ENCODE measurements at regions of chr10 and their contacts with region 1.

Region 1: DNA sequence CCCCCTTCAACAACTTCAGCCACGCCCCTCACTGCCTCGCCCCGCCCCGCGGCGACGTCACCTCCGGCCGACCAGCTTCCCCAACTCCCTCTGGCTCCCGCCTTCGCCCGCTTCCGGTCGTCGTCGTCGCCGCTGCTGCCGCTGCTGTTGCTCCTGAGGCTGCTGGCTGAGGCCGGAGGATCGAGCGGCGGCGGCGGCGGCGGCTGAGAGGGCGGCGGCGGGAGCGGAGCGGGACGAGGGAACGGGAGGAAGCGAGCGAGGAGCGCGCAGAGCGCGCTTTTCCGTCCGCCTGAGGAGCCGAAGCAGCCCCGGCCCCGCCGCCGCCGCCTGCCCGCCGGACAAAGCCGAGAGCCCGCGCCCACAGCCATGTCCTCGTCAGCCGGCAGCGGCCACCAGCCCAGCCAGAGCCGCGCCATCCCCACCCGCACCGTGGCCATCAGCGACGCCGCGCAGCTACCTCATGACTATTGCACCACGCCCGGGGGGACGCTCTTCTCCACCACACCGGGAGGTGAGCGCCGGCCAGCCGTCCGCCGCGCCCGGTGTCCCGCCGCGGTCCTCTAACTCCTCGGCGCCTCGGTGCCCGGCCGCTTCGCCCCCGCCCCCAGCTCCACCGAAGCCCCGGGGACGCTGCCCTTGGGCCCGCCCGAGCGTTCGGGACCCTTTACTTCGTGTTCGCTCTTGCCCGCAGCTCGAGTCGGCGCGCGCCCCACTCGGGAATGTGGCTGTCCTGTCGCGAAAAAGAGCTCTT is at the start of gene EIF4EBP2:
- DNase-seq: peak; percentile 84
- ATAC-seq: peak; percentile 80
- H3K4me3 ChIP-seq: peak within 1 kb of the TSS; percentile 90 to 94 (median 92)
- H3K27ac ChIP-seq: peak within 1 kb of the TSS; percentile 82
- H3K4me1 ChIP-seq: peaks cover 49% of the 10 kb centered on the region
- H3K27me3 ChIP-seq: no peaks in the 10 kb centered on the region; a peak in 1 of 5 replicates
- CTCF ChIP-seq: peak; percentile 31; the same call in 1 of the 2 replicates
- EP300 ChIP-seq: no peak
- POLR2A ChIP-seq: peak; percentile 63 to 90
- RAD21 ChIP-seq: peak; percentile 50
- total RNA-seq, gene EIF4EBP2: 22.0 and 38.0 TPM in 2 replicates

Region 2: GRCh38 chr10:70169649-70170364 is 234.4 kb before region 1 on chr10:
- CTCF ChIA-PET with region 1: no interaction called
- POLR2A ChIA-PET with region 1: interaction called, 14 read pairs
- in situ Hi-C with region 1: no loop called
- intact Hi-C with region 1: no loop called
- DNase-seq: no peak
- ATAC-seq: peak; percentile 5
- H3K4me3 ChIP-seq: peak overlapping the region; percentile 82 to 90 (median 90)
- H3K27ac ChIP-seq: peak overlapping the region; percentile 80
- H3K4me1 ChIP-seq: peaks cover 69% of the 10 kb centered on the region
- H3K27me3 ChIP-seq: no peaks in the 10 kb centered on the region; a peak in 1 of 5 replicates
- CTCF ChIP-seq: no peak
- EP300 ChIP-seq: no peak
- POLR2A ChIP-seq: no peak; a peak in 1 of 4 replicates
- RAD21 ChIP-seq: no peak

Region 3: DNA sequence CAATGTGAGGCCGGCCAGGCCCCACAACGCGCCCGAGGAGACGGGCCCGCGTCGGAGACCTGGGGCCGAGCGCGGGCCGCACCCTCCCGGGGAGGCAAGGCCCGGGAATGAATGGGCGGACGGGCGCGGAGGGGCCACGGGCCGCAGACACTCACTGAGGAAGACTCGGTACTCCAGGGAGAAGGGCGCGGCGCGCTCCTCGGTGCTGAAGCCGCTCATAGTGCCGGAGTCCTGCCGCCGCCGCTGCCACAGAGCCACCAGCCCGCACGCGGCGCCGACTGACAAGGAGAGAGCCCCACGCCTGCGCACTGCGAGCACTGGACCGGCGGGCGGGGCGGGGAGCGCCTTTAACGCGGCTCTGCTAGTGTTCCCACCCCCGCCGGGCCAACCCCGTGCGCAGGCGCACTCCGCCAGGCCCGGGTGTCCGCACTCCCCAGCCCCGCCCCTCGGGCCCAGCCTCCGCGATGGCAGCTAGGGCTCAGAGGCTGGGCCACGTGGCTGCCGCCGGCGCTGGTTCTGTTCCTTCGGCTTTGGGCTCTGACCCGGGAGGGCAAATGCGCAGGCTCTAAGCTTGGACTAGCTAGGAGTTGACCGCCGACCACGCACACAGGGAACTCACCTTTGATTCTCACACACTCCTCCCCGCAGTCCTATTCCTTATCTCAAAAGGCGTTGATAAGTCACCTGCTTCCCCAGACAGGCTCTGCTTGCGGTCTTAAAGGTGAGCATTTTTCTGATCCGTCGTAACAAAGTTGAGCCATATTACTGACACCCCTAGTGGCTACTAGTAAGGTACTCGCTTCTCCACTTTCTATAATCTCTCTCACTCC is 170.9 kb before region 1 on chr10 and contains the start of gene PPA1:
- CTCF ChIA-PET with region 1: no interaction called
- POLR2A ChIA-PET with region 1: interaction called, 12 read pairs
- in situ Hi-C with region 1: no loop called
- intact Hi-C with region 1: no loop called
- DNase-seq: peak; percentile 92
- ATAC-seq: peak; percentile 89
- H3K4me3 ChIP-seq: peak within 1 kb of the TSS; percentile 82 to 93 (median 86)
- H3K27ac ChIP-seq: peak within 1 kb of the TSS; percentile 92
- H3K4me1 ChIP-seq: peaks cover 68% of the 10 kb centered on the region
- H3K27me3 ChIP-seq: no peaks in the 10 kb centered on the region; a peak in 1 of 5 replicates
- CTCF ChIP-seq: peak; percentile 38; the same call in 1 of the 2 replicates
- EP300 ChIP-seq: peak in 1 of 2 experiments; percentile 42; a peak in 1 of 4 replicates
- POLR2A ChIP-seq: peak; percentile 89 to 97
- RAD21 ChIP-seq: peak; percentile 40; the same call in 1 of the 2 replicates
- total RNA-seq, gene PPA1: 250 and 371 TPM in 2 replicates

Region 4: DNA sequence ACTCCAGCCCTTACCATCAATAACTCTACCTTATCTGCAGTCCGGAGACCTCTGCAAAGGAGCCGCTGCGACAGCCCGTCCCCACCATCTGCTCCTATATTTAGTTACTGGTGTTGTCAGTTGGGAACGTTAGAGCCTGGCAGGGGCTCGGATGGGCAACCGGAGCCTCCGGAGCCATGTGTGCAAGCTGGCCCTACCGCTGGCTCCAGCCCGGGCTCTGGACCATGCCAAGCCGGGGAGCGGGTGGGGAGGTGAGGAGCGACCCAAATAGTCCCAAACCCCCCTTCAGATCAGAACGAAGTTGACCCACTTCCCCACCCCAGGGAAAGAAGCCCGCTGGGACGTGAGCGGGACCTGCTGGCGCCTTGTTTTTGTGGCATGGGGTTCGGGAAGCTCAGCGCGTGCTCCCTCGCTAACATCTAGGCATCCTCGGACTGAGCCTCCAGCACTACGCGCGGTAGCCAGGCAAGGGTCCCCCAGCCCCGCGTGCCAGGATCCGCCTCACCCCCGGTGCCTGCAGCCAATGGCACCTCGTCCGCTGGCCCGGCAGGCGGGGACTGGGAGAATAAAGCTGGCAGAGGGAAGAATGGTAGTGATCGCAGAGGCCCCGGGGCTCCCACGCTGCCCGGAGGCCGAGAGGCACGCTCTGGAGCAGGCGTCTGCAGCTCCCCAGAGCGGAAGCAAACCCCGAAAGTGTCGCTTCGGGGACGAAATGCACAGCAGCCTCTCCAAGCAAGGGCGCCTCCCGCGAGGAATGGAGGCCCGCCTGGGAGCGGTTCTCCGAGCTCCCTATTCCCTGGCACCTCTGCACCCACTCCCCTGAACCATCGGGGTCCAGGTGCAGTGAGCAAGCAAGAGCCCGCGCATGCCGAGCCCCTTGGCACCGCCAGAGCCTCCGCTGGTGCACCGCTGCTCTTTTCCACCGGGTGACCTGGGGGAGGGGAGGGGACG is 22.5 kb before region 1 on chr10:
- CTCF ChIA-PET with region 1: no interaction called
- POLR2A ChIA-PET with region 1: interaction called, 7 read pairs
- in situ Hi-C with region 1: no loop called
- intact Hi-C with region 1: loop called (anchors 2 kb)
- DNase-seq: no peak
- ATAC-seq: peak; percentile 49
- H3K4me3 ChIP-seq: peak overlapping the region; percentile 71 to 87 (median 75)
- H3K27ac ChIP-seq: no peak overlapping the region
- H3K4me1 ChIP-seq: peaks cover 41% of the 10 kb centered on the region
- H3K27me3 ChIP-seq: peaks cover 2 to 23% of the 10 kb centered on the region in 2 experiments; a peak in 3 of 5 replicates
- CTCF ChIP-seq: no peak; the same call in 1 of the 2 replicates
- EP300 ChIP-seq: no peak
- POLR2A ChIP-seq: no peak
- RAD21 ChIP-seq: no peak

Region 5: DNA sequence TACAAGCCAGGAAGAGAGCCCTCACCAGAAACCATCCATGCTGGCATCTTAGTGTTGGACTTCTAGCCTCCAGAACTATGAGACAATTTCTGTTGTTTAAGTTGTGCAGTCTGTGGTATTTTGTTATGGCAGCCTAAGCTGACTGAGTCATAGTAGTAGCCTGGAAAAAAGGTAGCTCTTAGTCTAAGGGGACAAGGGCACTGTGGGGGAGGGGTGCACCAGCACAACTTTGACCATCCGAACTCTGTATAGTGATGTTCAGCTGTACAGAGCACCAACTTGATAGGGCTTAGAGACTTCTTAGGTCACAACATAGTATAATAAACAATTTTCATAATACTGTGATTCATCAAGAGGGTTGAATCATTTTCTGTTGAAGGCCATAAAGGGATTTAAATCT is 14.0 kb after region 1 on chr10:
- CTCF ChIA-PET with region 1: no interaction called
- POLR2A ChIA-PET with region 1: interaction called, 15 read pairs
- in situ Hi-C with region 1: no loop called
- intact Hi-C with region 1: no loop called
- DNase-seq: no peak
- ATAC-seq: peak; percentile 54
- H3K4me3 ChIP-seq: no peak overlapping the region
- H3K27ac ChIP-seq: no peak overlapping the region
- H3K4me1 ChIP-seq: peaks cover 33% of the 10 kb centered on the region
- H3K27me3 ChIP-seq: no peaks in the 10 kb centered on the region
- CTCF ChIP-seq: no peak
- EP300 ChIP-seq: no peak
- POLR2A ChIP-seq: no peak
- RAD21 ChIP-seq: no peak

Region 6: DNA sequence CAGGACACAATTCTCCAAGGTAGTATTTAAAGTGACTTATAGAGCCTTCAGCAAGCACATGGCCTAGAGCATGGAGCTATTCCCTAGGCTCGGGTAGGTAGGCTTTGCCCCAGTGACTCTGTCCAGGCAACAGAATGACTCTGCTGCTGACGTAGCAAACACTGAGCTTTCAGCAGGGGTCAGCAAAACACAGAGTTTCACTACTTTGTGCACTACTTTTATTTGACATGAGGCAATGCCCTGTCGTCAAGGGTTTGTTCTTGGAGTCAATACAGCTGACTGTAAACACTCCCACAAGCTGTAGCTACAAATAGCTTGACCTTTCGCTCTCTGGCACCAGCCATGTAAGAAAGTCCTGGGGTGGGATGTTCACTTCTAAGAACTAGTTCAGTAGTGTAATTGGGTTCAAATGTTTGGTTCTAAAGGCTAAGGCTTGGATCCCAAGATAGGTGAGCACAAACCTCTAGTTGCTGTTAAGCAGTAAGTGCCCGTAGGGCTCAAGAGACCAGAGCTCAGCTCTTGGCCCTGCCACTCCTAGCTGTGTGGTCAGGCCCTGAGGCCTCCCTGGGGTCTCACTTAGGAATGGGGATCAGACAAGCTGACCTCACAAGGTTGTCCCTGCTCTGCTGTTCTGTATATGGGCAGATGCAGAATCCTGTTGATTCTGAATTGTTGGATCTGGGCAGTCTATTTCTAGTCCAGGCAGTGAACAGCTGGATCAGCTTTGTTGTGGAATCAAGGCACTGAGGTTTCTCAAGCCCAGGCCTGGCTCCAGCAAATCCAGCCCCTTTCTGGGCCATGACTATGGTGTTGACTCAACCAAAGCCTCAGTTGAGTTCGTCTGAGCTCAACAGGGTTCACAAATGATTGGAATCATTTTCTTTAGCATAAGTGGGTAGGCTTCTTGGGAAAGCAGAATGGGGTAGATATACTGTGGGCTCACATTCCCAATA is 26.6 kb after region 1 on chr10:
- CTCF ChIA-PET with region 1: no interaction called
- POLR2A ChIA-PET with region 1: interaction called, 32 read pairs
- in situ Hi-C with region 1: no loop called
- intact Hi-C with region 1: no loop called
- DNase-seq: peak; percentile 80
- ATAC-seq: peak; percentile 80
- H3K4me3 ChIP-seq: no peak overlapping the region
- H3K27ac ChIP-seq: no peak overlapping the region
- H3K4me1 ChIP-seq: peaks cover 29% of the 10 kb centered on the region
- H3K27me3 ChIP-seq: no peaks in the 10 kb centered on the region
- CTCF ChIP-seq: peak; percentile 80
- EP300 ChIP-seq: no peak
- POLR2A ChIP-seq: no peak
- RAD21 ChIP-seq: peak; percentile 46; the same call in 1 of the 2 replicates

Region 7: GRCh38 chr10:70445718-70446657 is 41.8 kb after region 1 on chr10:
- CTCF ChIA-PET with region 1: no interaction called
- POLR2A ChIA-PET with region 1: interaction called, 17 read pairs
- in situ Hi-C with region 1: no loop called
- intact Hi-C with region 1: no loop called
- DNase-seq: no peak
- ATAC-seq: no peak
- H3K4me3 ChIP-seq: no peak overlapping the region
- H3K27ac ChIP-seq: no peak overlapping the region
- H3K4me1 ChIP-seq: peaks cover 70% of the 10 kb centered on the region
- H3K27me3 ChIP-seq: no peaks in the 10 kb centered on the region; a peak in 2 of 5 replicates
- CTCF ChIP-seq: no peak
- EP300 ChIP-seq: peak in 1 of 2 experiments; percentile 16; a peak in 1 of 4 replicates
- POLR2A ChIP-seq: no peak
- RAD21 ChIP-seq: no peak

Region 8: GRCh38 chr10:70461215-70461986 is 57.2 kb after region 1 on chr10:
- CTCF ChIA-PET with region 1: no interaction called
- POLR2A ChIA-PET with region 1: no interaction called
- in situ Hi-C with region 1: no loop called
- intact Hi-C with region 1: no loop called
- DNase-seq: peak; percentile 37
- ATAC-seq: peak; percentile 85
- H3K4me3 ChIP-seq: no peak overlapping the region
- H3K27ac ChIP-seq: no peak overlapping the region
- H3K4me1 ChIP-seq: no peaks in the 10 kb centered on the region
- H3K27me3 ChIP-seq: peaks cover 2 to 18% of the 10 kb centered on the region in 2 experiments; a peak in 4 of 5 replicates
- CTCF ChIP-seq: peak; percentile 89
- EP300 ChIP-seq: no peak
- POLR2A ChIP-seq: no peak
- RAD21 ChIP-seq: peak; percentile 82

Region 9: DNA sequence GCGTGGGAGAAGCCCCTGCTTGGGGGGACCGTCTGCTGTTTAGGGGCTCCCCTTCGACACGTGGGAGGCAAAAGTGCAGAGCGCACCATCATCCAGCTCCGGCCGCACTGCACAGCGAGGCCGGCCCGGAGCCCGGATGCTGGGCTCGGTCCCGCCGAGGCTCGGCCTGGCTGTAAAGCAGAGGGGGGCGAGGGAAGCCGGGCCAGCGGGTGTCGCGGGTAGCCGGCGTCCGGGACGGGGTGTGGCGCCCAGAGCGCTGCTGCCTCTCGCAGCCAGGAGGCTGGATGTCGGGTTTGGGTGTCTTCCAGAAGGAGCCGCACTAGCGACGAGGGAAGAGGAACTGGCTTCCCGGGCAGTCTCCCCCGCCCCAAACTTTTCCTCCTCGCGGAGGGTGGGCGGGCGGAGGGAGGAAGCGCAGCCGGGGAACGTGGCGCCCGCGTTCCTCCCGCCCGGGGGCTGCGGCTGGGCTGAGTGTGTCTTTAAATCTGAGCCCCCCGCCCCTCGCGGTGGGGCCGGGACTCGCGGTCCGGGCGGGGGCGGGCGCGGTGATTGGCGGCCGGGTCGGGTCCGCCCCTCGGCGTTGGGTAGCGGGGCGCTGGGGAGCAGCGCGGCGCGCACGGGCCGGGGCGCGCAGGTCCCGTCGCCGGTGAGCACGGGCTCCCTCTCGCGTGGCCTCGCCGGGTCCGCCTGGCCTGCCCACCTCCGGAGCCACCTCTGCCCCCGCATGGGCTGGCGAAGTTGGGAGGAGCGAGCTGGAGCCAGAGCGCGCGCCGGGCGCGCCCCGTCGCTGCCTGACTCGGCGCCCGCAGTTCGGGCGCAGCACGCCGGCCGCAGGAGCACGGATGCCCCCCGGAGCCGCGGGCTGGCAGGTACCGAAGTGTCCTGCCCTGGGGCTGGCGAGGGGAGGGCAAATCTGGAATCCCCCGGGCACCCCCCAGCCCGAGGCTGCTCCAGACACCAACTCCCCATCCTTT is 74.3 kb after region 1 on chr10 and contains the start of gene PALD1:
- CTCF ChIA-PET with region 1: no interaction called
- POLR2A ChIA-PET with region 1: no interaction called
- in situ Hi-C with region 1: no loop called
- intact Hi-C with region 1: no loop called
- DNase-seq: no peak
- ATAC-seq: peak; percentile 21; the same call in 2 of the 3 replicates
- H3K4me3 ChIP-seq: peak within 1 kb of the TSS; percentile 26 to 52 (median 36); a peak in 4 of 6 replicates
- H3K27ac ChIP-seq: no peak within 1 kb of the TSS
- H3K4me1 ChIP-seq: peaks cover 15% of the 10 kb centered on the region
- H3K27me3 ChIP-seq: peaks cover 7 to 79% of the 10 kb centered on the region in 2 experiments
- CTCF ChIP-seq: no peak
- EP300 ChIP-seq: no peak
- POLR2A ChIP-seq: no peak
- RAD21 ChIP-seq: no peak; the same call in 1 of the 2 replicates
- total RNA-seq, gene PALD1: 0.06 and 0.07 TPM in 2 replicates